WTC11 (cell line): ENCODE measurements at regions of chr5 and their contacts with region 1.

Region 1: GRCh38 chr5:141040771-141041426 is 10.3 kb upstream of the PCDHB1 start:
- DNase-seq: peak; percentile 99
- ATAC-seq: peak; percentile 88
- H3K4me3 Mint-ChIP-seq: no peak overlapping the region
- H3K27ac Mint-ChIP-seq: no peak overlapping the region
- H3K4me1 Mint-ChIP-seq: peaks cover 4% of the 10 kb centered on the region
- H3K27me3 Mint-ChIP-seq: peaks cover 8% of the 10 kb centered on the region
- CTCF ChIP-seq: peak; percentile 81

Region 2: GRCh38 chr5:140346348-140347101 is 694.4 kb before region 1 on chr5 and contains the start of gene HBEGF:
- CTCF ChIA-PET with region 1: no interaction called
- POLR2A ChIA-PET with region 1: no interaction called
- DNase-seq: peak; percentile 93
- ATAC-seq: peak; percentile 86
- H3K4me3 Mint-ChIP-seq: peak within 1 kb of the TSS; percentile 68
- H3K27ac Mint-ChIP-seq: no peak within 1 kb of the TSS
- H3K4me1 Mint-ChIP-seq: peaks cover 27% of the 10 kb centered on the region
- H3K27me3 Mint-ChIP-seq: peaks cover 11% of the 10 kb centered on the region
- CTCF ChIP-seq: peak; percentile 11; the same call in 1 of the 2 replicates
- total RNA-seq, gene HBEGF: 2.2 to 4.0 TPM (median 2.5 TPM) in 3 replicates

Region 3: DNA sequence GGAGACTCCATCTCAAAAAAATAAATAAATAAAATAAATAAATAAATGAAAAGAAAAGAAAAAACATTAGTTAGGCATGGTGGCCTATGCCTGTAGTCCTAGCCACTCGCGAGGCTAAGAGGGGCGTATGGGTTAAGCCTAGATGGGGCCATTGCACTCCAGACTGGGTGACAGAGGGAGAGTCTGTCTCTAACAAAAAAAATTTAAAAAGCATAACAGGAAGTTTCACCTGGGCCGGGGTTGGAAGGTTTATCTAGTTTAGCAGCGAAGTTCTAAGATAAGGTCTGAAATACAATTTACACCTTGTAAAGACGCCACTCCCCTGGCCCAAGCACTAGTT is 322.7 kb before region 1 on chr5:
- CTCF ChIA-PET with region 1: no interaction called
- POLR2A ChIA-PET with region 1: no interaction called
- DNase-seq: no peak
- ATAC-seq: no peak
- H3K4me3 Mint-ChIP-seq: no peak overlapping the region
- H3K27ac Mint-ChIP-seq: no peak overlapping the region
- H3K4me1 Mint-ChIP-seq: no peaks in the 10 kb centered on the region
- H3K27me3 Mint-ChIP-seq: no peaks in the 10 kb centered on the region; the same call in 1 of the 2 replicates
- CTCF ChIP-seq: no peak

Region 4: GRCh38 chr5:140795259-140795641 is 245.6 kb before region 1 on chr5:
- CTCF ChIA-PET with region 1: interaction called, 12 read pairs
- POLR2A ChIA-PET with region 1: no interaction called
- DNase-seq: no peak
- ATAC-seq: peak; percentile 88
- H3K4me3 Mint-ChIP-seq: peak overlapping the region; percentile 87
- H3K27ac Mint-ChIP-seq: 0 out of 2 replicates have a peak overlapping the region, but pooled peaks have one; percentile 27
- H3K4me1 Mint-ChIP-seq: peaks cover 4% of the 10 kb centered on the region; the same call in 1 of the 2 replicates
- H3K27me3 Mint-ChIP-seq: no peaks in the 10 kb centered on the region
- CTCF ChIP-seq: no peak

Region 5: GRCh38 chr5:140855772-140856674 is 184.9 kb before region 1 on chr5 and contains the start of gene PCDHA10:
- CTCF ChIA-PET with region 1: interaction called, 80 read pairs
- POLR2A ChIA-PET with region 1: interaction called, 5 read pairs
- DNase-seq: peak; percentile 48
- ATAC-seq: peak; percentile 84
- H3K4me3 Mint-ChIP-seq: peak within 1 kb of the TSS; percentile 92
- H3K27ac Mint-ChIP-seq: peak within 1 kb of the TSS; percentile 78
- H3K4me1 Mint-ChIP-seq: peaks cover 23% of the 10 kb centered on the region
- H3K27me3 Mint-ChIP-seq: no peaks in the 10 kb centered on the region
- CTCF ChIP-seq: peak; percentile 36
- total RNA-seq, gene PCDHA10: 10.8 to 12.0 TPM (median 11.6 TPM) in 3 replicates

Region 6: GRCh38 chr5:140875066-140876065 is 165.5 kb before region 1 on chr5 and contains the start of gene PCDHA12:
- CTCF ChIA-PET with region 1: interaction called, 99 read pairs
- POLR2A ChIA-PET with region 1: interaction called, 8 read pairs
- DNase-seq: no peak
- ATAC-seq: peak; percentile 59
- H3K4me3 Mint-ChIP-seq: peak within 1 kb of the TSS; percentile 99
- H3K27ac Mint-ChIP-seq: peak within 1 kb of the TSS; percentile 93
- H3K4me1 Mint-ChIP-seq: peaks cover 28% of the 10 kb centered on the region
- H3K27me3 Mint-ChIP-seq: no peaks in the 10 kb centered on the region
- CTCF ChIP-seq: peak; percentile 42; the same call in 1 of the 2 replicates
- total RNA-seq, gene PCDHA12: 9.6 to 10.7 TPM (median 10.1 TPM) in 3 replicates

Region 7: DNA sequence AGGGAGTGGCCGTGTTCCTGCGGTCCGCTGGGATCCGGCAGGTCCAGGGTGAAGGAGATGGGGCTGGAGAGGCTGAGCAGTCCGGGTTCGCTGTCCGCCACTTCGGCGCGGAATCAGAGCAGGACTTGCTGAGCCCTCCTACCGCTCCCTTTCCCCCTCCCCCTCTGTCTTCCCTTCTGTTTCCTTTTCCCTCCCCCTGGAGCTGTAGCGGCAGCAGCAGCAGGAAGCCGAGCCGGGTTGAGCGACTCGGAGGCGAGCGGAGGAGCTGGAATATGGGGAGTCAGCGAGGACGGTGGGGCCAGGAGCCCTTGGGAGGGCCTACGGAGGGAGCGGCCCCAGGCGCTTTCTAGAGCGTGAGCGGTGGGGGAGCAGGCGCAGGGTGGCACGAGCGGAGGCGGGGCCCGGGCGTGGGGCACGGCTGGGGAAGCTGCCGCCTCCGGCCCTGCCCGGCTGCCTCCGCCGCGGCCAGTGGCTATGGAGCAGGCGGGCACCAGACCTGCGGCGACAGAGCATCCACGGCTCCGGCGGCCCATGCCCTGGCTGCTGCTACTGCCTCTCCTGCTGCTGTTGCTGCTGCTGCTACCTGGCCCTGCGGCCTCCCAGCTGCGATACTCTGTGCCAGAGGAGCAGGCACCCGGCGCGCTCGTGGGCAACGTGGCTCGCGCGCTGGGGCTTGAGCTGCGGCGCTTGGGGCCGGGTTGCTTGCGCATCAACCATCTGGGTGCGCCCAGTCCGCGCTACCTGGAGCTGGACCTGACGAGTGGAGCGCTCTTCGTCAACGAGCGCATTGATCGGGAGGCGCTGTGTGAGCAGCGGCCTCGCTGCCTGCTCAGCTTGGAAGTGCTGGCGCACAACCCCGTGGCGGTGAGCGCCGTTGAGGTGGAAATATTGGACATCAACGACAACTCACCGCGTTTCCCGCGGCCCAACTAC is 74.3 kb before region 1 on chr5 and contains the start of gene PCDHAC2:
- CTCF ChIA-PET with region 1: interaction called, 68 read pairs
- POLR2A ChIA-PET with region 1: interaction called, 21 read pairs
- DNase-seq: peak; percentile 78
- ATAC-seq: peak; percentile 77
- H3K4me3 Mint-ChIP-seq: peak within 1 kb of the TSS; percentile 92
- H3K27ac Mint-ChIP-seq: peak within 1 kb of the TSS; percentile 51; the same call in 1 of the 2 replicates
- H3K4me1 Mint-ChIP-seq: peaks cover 50% of the 10 kb centered on the region
- H3K27me3 Mint-ChIP-seq: peaks cover 21% of the 10 kb centered on the region
- CTCF ChIP-seq: no peak
- total RNA-seq, gene PCDHAC2: 6.7 to 11.3 TPM (median 7.9 TPM) in 3 replicates

Region 8: GRCh38 chr5:141001854-141002604 is 38.9 kb before region 1 on chr5:
- CTCF ChIA-PET with region 1: interaction called, 44 read pairs
- POLR2A ChIA-PET with region 1: interaction called, 6 read pairs
- DNase-seq: peak; percentile 87
- ATAC-seq: peak; percentile 72
- H3K4me3 Mint-ChIP-seq: peak overlapping the region; percentile 85
- H3K27ac Mint-ChIP-seq: peak overlapping the region; percentile 99
- H3K4me1 Mint-ChIP-seq: peaks cover 71% of the 10 kb centered on the region
- H3K27me3 Mint-ChIP-seq: no peaks in the 10 kb centered on the region
- CTCF ChIP-seq: no peak